Panc1 (cell line): ENCODE measurements at regions of chr1 and their contacts with region 1.

Region 1: GRCh38 chr1:151924679-151925587 is 15.6 kb upstream of the THEM4 start:
- DNase-seq: no peak
- ATAC-seq: no peak
- H3K4me3 ChIP-seq: no peak overlapping the region
- H3K27ac ChIP-seq: peak overlapping the region; percentile 50; the same call in 1 of the 2 replicates
- H3K4me1 ChIP-seq: peaks cover 9% of the 10 kb centered on the region; the same call in 1 of the 2 replicates
- H3K27me3 ChIP-seq: no peaks in the 10 kb centered on the region
- CTCF ChIP-seq: no peak

Region 2: DNA sequence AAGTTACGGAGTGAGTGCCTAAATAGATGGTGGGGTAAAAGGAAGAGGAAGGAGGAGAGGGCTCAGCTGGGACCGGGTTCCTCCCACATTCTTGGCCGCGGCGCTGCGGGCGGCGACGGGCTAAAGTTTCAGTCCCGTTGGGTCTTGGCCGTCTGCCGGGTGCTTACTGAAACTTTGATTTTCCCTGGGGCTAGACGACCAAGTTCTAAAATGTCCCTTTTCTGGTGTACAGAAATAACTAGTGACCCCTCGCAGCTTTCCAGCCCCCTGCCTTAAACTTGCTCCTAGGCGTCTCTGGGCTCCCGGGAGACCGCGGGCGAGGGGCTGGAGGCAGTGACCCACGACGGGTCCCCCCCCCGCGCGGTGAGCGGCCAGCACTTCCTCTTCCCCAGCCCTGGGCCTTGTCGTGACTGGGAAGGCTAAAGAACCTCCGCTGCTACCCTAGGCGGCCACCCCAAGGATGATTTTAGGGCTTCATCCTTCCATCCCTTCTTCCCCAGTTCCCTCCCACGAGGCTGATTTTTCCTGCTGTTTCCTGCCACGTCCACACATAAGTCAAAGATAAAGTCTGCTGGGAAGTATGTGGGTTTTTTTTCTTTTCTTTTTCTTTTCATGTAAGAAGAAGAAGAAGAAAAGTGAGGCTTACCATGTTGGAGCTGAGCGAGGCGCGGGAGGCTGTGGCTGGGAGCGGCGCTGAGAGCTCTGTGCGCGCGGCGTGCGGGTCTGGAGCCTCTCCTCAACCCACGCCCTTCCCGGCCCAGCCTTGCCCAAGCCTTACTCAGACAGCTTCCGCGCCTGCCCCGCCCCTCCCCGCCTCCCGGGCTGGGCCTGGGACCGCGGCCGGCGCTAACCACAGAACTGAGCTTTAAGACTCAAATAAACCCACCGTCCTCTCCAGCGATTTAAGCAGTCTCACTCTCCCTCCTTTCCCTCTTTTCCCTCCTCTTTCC is 111.6 kb after region 1 on chr1 and contains the start of gene S100A11:
- CTCF ChIA-PET with region 1: no interaction called
- POLR2A ChIA-PET with region 1: interaction called, 27 read pairs
- in situ Hi-C with region 1: no loop called
- intact Hi-C with region 1: no loop called
- DNase-seq: no peak
- ATAC-seq: peak; percentile 97
- H3K4me3 ChIP-seq: peak within 1 kb of the TSS; percentile 94 to 98
- H3K27ac ChIP-seq: peak within 1 kb of the TSS; percentile 99
- H3K4me1 ChIP-seq: peaks cover 22% of the 10 kb centered on the region
- H3K27me3 ChIP-seq: no peaks in the 10 kb centered on the region
- CTCF ChIP-seq: no peak
- total RNA-seq, gene S100A11: 474 TPM